CD14-positive monocyte (primary cell): ENCODE measurements at regions of chr12 and their contacts with region 1.

Region 1: GRCh38 chr12:113232840-113233585 is 11.7 kb downstream of the TPCN1 start:
- DNase-seq: peak; percentile 91 to 95 (median 92)
- H3K4me3 ChIP-seq: peak overlapping the region in 2 of 3 experiments; percentile 16 to 56
- H3K4me3 Mint-ChIP-seq: peak overlapping the region; percentile 76 to 92
- H3K27ac ChIP-seq: peak overlapping the region; percentile 94 to 99
- H3K27ac Mint-ChIP-seq: peak overlapping the region; percentile 98 to 100 (median 99)
- H3K4me1 ChIP-seq: peaks cover 94 to 98% of the 10 kb centered on the region in 2 donors
- H3K4me1 Mint-ChIP-seq: peaks cover 95% of the 10 kb centered on the region
- H3K27me3 ChIP-seq: no peaks in the 10 kb centered on the region
- H3K27me3 Mint-ChIP-seq: no peaks in the 10 kb centered on the region
- CTCF ChIP-seq: peak; percentile 65

Region 2: DNA sequence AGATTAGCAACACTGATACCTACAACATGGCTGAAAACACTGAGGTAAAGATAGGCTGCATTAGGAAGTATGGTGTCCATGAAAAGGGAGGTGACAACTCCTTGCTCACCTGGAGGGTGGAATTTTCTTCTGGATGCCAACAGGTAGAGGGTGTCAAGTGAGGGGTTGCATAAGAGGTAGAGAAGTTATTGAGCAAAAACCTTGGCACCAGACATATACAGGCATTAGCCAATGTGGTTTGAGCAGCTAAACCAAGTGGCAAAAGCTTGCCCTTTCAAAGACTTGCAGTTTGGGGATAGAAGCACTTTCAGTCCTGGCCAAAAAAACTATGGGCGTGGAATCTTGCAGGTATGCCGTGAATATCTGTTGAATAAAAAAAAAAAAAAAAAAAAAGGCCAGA is 43.7 kb before region 1 on chr12:
- intact Hi-C with region 1: no loop called
- DNase-seq: no peak
- H3K4me3 ChIP-seq: no peak overlapping the region
- H3K4me3 Mint-ChIP-seq: no peak overlapping the region
- H3K27ac ChIP-seq: no peak overlapping the region
- H3K27ac Mint-ChIP-seq: peak overlapping the region in 1 of 7 donors; percentile 0
- H3K4me1 ChIP-seq: peaks cover 14 to 30% of the 10 kb centered on the region in 2 donors
- H3K4me1 Mint-ChIP-seq: peaks cover 25% of the 10 kb centered on the region
- H3K27me3 ChIP-seq: no peaks in the 10 kb centered on the region
- H3K27me3 Mint-ChIP-seq: peaks cover 0 to 1% (median 0%) of the 10 kb centered on the region in 3 donors
- CTCF ChIP-seq: no peak

Region 3: GRCh38 chr12:113214938-113215400 is 18.0 kb before region 1 on chr12:
- intact Hi-C with region 1: loop called in 1 of 2 experiments (anchors 2 kb)
- DNase-seq: peak; percentile 92 to 99 (median 98)
- H3K4me3 ChIP-seq: peak overlapping the region in 1 of 3 experiments; percentile 48
- H3K4me3 Mint-ChIP-seq: peak overlapping the region; percentile 56 to 86
- H3K27ac ChIP-seq: peak overlapping the region; percentile 58 to 87
- H3K27ac Mint-ChIP-seq: peak overlapping the region; percentile 96 to 99 (median 98)
- H3K4me1 ChIP-seq: peaks cover 79 to 82% of the 10 kb centered on the region in 2 donors
- H3K4me1 Mint-ChIP-seq: peaks cover 71% of the 10 kb centered on the region
- H3K27me3 ChIP-seq: no peaks in the 10 kb centered on the region
- H3K27me3 Mint-ChIP-seq: no peaks in the 10 kb centered on the region
- CTCF ChIP-seq: peak; percentile 45

Region 4: GRCh38 chr12:113222730-113223531 is 10.1 kb before region 1 on chr12:
- intact Hi-C with region 1: loop called (anchors 1 to 2 kb)
- DNase-seq: peak in 2 of 3 donors; percentile 33 to 36
- H3K4me3 ChIP-seq: peak overlapping the region; percentile 92 to 98 (median 93)
- H3K4me3 Mint-ChIP-seq: peak overlapping the region; percentile 89 to 96
- H3K27ac ChIP-seq: peak overlapping the region; percentile 73 to 83
- H3K27ac Mint-ChIP-seq: peak overlapping the region; percentile 88 to 98 (median 92)
- H3K4me1 ChIP-seq: peaks cover 60 to 68% of the 10 kb centered on the region in 2 donors
- H3K4me1 Mint-ChIP-seq: peaks cover 49% of the 10 kb centered on the region
- H3K27me3 ChIP-seq: no peaks in the 10 kb centered on the region
- H3K27me3 Mint-ChIP-seq: no peaks in the 10 kb centered on the region
- CTCF ChIP-seq: no peak